ENCODE measurements at regions of chr18 and their contacts with region 1.

Region 1: GRCh38 chr18:36757081-36757480 is 71.7 kb downstream of the TPGS2 start:
- DNase-seq: peak in 1 of 7 donors; percentile 22
- H3K4me3 ChIP-seq: no peak overlapping the region
- H3K27ac ChIP-seq: no peak overlapping the region
- H3K4me1 ChIP-seq: peaks cover 0 to 7% of the 10 kb centered on the region in 2 donors
- H3K27me3 ChIP-seq: no peaks in the 10 kb centered on the region
- CTCF ChIP-seq: peak; percentile 55 to 78 (median 72)
- POLR2A ChIP-seq: no peak

Region 2: DNA sequence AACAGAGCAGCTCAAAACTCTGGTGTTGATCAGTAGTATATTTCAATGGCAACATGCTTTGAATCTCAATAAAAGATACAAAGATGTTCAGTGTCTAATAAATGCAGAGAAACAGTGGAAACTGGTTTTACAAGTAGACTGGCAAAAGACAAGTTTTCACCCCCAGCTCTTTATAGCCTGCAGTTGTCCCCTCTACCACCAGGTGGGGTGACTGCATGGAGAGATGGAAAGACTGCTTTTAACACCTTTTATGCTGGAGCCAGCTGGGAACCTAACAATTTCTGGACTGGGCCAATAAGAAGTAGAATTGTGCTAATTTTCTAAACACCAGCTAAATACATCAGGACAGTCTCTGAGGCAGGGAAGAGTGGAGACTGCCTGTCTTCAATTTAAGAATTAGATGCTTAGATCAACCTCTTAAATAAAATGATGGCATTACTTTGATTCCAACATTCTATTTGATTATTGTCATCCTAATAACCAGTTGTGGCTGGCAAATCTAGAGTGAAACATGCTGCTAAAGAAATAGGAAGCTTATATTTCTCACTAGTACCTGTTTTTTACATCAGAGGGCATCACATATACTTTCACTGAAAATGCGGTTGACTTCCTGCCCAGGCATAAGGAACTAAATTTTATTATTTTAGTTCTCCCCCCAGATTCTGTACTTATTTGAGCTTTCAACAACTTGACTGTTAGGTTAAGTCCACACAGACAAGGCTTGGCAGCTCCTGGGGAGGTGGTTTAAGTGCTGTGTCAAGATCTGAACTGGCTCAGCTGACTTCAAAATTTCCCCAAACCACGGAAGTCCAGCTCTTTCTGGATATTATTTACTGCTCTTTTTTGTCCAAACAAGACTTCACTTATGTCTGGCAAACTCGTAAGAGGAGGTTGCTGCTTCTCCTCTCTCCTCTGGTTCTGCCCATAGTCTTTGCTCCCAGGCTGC is 68.8 kb before region 1 on chr18:
- intact Hi-C with region 1: loop called (anchors 5 kb)
- DNase-seq: peak; percentile 66 to 91 (median 70)
- H3K4me3 ChIP-seq: no peak overlapping the region
- H3K27ac ChIP-seq: no peak overlapping the region
- H3K4me1 ChIP-seq: no peaks in the 10 kb centered on the region
- H3K27me3 ChIP-seq: no peaks in the 10 kb centered on the region
- CTCF ChIP-seq: peak; percentile 80 to 89 (median 84)
- POLR2A ChIP-seq: no peak

Region 3: DNA sequence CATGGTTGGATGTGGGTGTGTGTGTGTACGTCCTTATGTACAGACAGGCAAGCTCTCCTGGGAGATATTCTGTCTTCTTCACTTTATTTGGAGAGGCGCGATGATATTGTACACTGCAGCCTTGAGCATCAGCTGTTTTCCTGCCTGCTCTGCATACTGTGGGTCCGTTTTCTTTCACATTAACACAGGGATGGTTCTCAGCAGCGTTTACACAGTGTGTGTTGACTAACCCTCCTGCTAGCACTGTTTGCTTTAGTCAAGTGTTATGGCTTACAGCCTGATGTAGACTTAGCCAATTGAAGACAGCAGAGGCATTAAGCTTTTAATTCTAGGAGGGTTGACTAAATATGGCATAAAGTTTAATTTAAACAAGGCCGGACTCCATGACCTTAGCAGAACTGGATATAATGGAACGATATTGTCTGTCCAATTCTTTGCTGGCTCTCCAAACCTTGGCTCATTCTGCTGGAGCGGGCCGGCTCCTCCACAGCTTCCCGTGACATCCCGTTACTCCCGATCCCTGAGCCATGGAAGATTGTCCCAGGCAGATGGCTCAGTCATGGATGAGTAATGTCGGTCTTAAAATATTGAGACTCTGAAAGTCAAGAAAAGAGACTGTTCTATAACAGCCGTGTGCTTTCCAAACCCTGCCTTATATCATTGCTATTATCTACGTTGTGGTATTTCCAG is 63.0 kb before region 1 on chr18:
- intact Hi-C with region 1: loop called (anchors 5 kb)
- DNase-seq: no peak
- H3K4me3 ChIP-seq: no peak overlapping the region
- H3K27ac ChIP-seq: peak overlapping the region in 1 of 5 donors; percentile 33
- H3K4me1 ChIP-seq: no peaks in the 10 kb centered on the region
- H3K27me3 ChIP-seq: no peaks in the 10 kb centered on the region
- CTCF ChIP-seq: no peak
- POLR2A ChIP-seq: no peak